ENCODE measurements at regions of chr19 and their contacts with region 1.

Region 1: DNA sequence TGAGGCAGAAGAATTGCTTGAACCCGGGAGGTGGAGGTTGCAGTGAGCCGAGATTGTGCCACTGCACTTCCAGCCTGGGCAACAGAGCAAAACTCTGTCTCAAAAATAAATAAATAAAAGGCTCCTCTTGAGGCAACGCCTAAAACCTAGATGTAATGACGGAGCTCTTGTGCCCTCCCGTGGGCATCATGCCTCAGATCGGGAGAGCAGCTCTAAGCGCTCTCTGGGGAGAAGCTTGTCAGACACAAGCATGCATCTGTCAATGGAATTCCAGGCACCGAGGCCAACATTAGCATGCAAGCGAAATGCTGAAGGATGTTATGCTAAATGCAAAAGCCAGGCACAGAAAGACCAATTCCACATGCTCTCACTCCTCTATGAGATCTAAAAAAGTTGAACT is 45.6 kb upstream of the MRI1 start:
- DNase-seq: peak in 1 of 4 experiments; percentile 17
- ATAC-seq: 0 out of 3 replicates have a peak, but pooled peaks have one; percentile 33
- H3K4me3 ChIP-seq: no peak overlapping the region
- H3K27ac ChIP-seq: no peak overlapping the region
- H3K4me1 ChIP-seq: peaks cover 7 to 9% of the 10 kb centered on the region in 2 experiments; a peak in 3 of 5 replicates
- H3K27me3 ChIP-seq: peaks cover 3 to 16% of the 10 kb centered on the region in 2 experiments; a peak in 3 of 5 replicates
- CTCF ChIP-seq: peak in 1 of 3 experiments; percentile 17; a peak in 1 of 6 replicates
- EP300 ChIP-seq: no peak
- POLR2A ChIP-seq: no peak
- RAD21 ChIP-seq: peak in 1 of 2 experiments; percentile 40; a peak in 2 of 4 replicates

Region 2: DNA sequence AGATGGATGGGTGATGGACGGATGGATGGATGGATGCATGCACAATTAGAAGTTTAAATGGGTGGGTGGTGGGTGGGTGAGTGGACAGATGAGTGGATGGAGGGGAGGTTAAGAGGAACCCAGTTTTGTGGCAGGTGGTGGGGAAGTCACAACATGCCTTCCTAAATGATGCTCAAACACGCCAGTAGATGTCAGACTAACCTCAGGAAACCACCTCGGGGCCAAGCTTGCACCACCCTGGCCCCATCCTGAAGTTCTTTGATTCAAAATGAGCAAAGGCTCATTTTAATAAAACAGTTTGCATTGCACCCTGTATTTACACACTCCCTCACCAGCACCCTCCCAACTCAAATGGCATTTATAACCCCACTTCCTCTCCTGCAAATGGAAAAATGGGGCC is 121.1 kb before region 1 on chr19:
- CTCF ChIA-PET with region 1: interaction called, 15 read pairs
- POLR2A ChIA-PET with region 1: no interaction called
- in situ Hi-C with region 1: no loop called
- intact Hi-C with region 1: loop called (anchors 2 kb)
- DNase-seq: peak; percentile 72 to 81 (median 76)
- ATAC-seq: peak; percentile 88
- H3K4me3 ChIP-seq: no peak overlapping the region
- H3K27ac ChIP-seq: no peak overlapping the region
- H3K4me1 ChIP-seq: peaks cover 0 to 4% of the 10 kb centered on the region in 2 experiments; a peak in 2 of 5 replicates
- H3K27me3 ChIP-seq: peaks cover 3 to 14% of the 10 kb centered on the region in 2 experiments; a peak in 3 of 5 replicates
- CTCF ChIP-seq: peak; percentile 68 to 82 (median 73)
- EP300 ChIP-seq: no peak
- POLR2A ChIP-seq: no peak
- RAD21 ChIP-seq: peak; percentile 77 to 90

Region 3: DNA sequence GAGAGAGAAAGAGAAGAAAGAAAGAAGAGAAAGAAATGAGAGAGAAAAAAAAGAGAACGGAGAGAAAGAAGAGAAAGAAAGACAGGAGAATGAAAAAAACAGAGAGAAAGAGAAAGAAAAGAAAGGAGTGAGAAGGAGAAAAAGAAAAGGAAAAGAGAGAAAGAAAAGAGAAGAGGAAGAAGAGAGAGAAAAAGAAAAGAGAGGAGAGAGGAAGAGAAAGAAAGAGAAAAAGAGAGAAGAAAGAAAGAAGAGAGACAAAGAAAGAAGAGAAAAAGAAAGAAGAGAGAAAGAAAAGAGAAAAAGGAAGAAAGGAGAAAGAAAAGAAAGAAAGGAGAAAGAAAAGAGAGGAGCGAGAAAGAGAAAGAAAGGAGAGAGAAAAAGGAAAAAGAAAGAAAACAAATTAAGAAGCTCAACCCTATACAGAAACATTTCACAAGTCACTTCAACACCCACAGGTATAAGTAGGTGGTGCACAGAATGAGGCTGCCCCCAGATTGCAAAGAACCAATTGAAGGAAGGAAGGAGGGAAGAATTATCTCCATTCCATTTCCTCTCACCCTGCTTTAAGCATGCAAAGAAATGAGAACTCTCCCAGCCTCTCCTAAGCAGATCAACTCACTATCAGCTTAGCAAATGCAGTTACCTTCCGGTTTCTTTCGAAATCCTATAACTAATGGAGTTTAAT is 113.7 kb before region 1 on chr19:
- CTCF ChIA-PET with region 1: no interaction called
- POLR2A ChIA-PET with region 1: no interaction called
- in situ Hi-C with region 1: loop called (anchors 5 kb)
- intact Hi-C with region 1: no loop called
- DNase-seq: no peak
- ATAC-seq: no peak
- H3K4me3 ChIP-seq: no peak overlapping the region
- H3K27ac ChIP-seq: no peak overlapping the region
- H3K4me1 ChIP-seq: no peaks in the 10 kb centered on the region
- H3K27me3 ChIP-seq: peaks cover 9 to 26% of the 10 kb centered on the region in 2 experiments; a peak in 3 of 5 replicates
- CTCF ChIP-seq: no peak
- EP300 ChIP-seq: no peak
- POLR2A ChIP-seq: no peak
- RAD21 ChIP-seq: no peak

Region 4: DNA sequence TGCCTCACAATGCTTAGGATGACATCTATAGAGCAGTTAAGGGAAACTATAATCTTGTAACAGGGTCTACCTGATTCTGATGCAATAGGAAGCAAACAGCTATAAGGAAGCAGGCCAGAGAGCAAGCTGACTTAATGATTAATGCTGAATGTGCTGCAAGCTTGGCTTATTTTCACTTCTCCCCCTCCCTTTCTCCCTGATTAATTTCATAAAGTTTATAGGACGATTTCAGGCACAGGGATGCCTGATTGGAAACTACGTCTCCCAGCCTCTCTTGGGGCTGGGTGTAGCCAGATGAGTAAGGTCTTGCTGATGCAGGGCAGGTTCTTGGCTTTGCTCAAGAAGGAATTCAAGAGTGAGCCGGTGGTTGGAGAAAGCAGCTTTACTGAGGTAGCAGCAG is 37.2 kb before region 1 on chr19:
- CTCF ChIA-PET with region 1: no interaction called
- POLR2A ChIA-PET with region 1: no interaction called
- in situ Hi-C with region 1: no loop called
- intact Hi-C with region 1: no loop called
- DNase-seq: no peak
- ATAC-seq: peak; percentile 36; the same call in 1 of the 3 replicates
- H3K4me3 ChIP-seq: no peak overlapping the region
- H3K27ac ChIP-seq: no peak overlapping the region
- H3K4me1 ChIP-seq: no peaks in the 10 kb centered on the region
- H3K27me3 ChIP-seq: peaks cover 3 to 12% of the 10 kb centered on the region in 2 experiments; a peak in 4 of 5 replicates
- CTCF ChIP-seq: no peak
- EP300 ChIP-seq: no peak; the same call in 1 of the 2 replicates
- POLR2A ChIP-seq: no peak
- RAD21 ChIP-seq: no peak